ENCODE measurements at regions of chr20 and their contacts with region 1.

Region 1: GRCh38 chr20:15248618-15249395 is 911.4 kb upstream of the FLRT3 start:
- DNase-seq: no peak
- ATAC-seq: no peak
- H3K4me3 ChIP-seq: no peak overlapping the region
- H3K4me3 Mint-ChIP-seq: no peak overlapping the region
- H3K27ac ChIP-seq: no peak overlapping the region
- H3K27ac Mint-ChIP-seq: no peak overlapping the region
- H3K4me1 ChIP-seq: no peaks in the 10 kb centered on the region
- H3K4me1 Mint-ChIP-seq: no peaks in the 10 kb centered on the region
- H3K27me3 ChIP-seq: no peaks in the 10 kb centered on the region
- H3K27me3 Mint-ChIP-seq: no peaks in the 10 kb centered on the region
- CTCF ChIP-seq: no peak

Region 2: DNA sequence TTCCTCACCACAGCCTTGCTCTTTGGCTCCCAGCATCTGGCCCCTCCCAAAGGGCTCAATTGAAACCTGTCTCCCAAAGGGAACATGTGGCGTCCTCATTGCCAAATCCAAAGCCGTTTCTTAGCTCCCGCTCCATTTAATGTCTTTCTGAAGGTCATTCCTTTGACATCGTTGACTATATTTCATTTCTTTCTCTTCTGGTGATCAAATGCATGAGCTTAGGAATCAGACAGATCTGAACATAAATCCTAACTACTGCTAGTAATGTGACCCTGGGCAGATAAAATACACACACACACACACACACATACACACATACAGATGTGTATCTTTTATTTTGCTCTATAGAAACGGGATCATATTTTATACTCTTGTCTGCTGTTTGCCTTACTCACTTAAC is 53.3 kb after region 1 on chr20:
- intact Hi-C with region 1: loop called (anchors 10 kb)
- DNase-seq: no peak
- ATAC-seq: no peak
- H3K4me3 ChIP-seq: no peak overlapping the region
- H3K4me3 Mint-ChIP-seq: no peak overlapping the region
- H3K27ac ChIP-seq: no peak overlapping the region
- H3K27ac Mint-ChIP-seq: no peak overlapping the region
- H3K4me1 ChIP-seq: no peaks in the 10 kb centered on the region
- H3K4me1 Mint-ChIP-seq: no peaks in the 10 kb centered on the region
- H3K27me3 ChIP-seq: no peaks in the 10 kb centered on the region
- H3K27me3 Mint-ChIP-seq: no peaks in the 10 kb centered on the region
- CTCF ChIP-seq: no peak

Region 3: GRCh38 chr20:15440049-15440702 is 191.4 kb after region 1 on chr20:
- intact Hi-C with region 1: no loop called
- DNase-seq: no peak
- ATAC-seq: no peak
- H3K4me3 ChIP-seq: no peak overlapping the region
- H3K4me3 Mint-ChIP-seq: no peak overlapping the region
- H3K27ac ChIP-seq: no peak overlapping the region
- H3K27ac Mint-ChIP-seq: no peak overlapping the region
- H3K4me1 ChIP-seq: no peaks in the 10 kb centered on the region
- H3K4me1 Mint-ChIP-seq: no peaks in the 10 kb centered on the region
- H3K27me3 ChIP-seq: no peaks in the 10 kb centered on the region
- H3K27me3 Mint-ChIP-seq: no peaks in the 10 kb centered on the region
- CTCF ChIP-seq: no peak

Measured in natural killer cell (primary cell).